GM10248 (cell line): ENCODE measurements at regions of chr1 and their contacts with region 1.

Region 1: GRCh38 chr1:201970334-201971159 is 11.9 kb upstream of the RNPEP start:
- DNase-seq: no peak
- CTCF ChIP-seq: no peak

Region 2: GRCh38 chr1:201877877-201878401 is 92.6 kb before region 1 on chr1:
- CTCF ChIA-PET with region 1: interaction called, 27 read pairs
- POLR2A ChIA-PET with region 1: no interaction called
- DNase-seq: peak; percentile 53
- CTCF ChIP-seq: peak; percentile 42

Region 3: DNA sequence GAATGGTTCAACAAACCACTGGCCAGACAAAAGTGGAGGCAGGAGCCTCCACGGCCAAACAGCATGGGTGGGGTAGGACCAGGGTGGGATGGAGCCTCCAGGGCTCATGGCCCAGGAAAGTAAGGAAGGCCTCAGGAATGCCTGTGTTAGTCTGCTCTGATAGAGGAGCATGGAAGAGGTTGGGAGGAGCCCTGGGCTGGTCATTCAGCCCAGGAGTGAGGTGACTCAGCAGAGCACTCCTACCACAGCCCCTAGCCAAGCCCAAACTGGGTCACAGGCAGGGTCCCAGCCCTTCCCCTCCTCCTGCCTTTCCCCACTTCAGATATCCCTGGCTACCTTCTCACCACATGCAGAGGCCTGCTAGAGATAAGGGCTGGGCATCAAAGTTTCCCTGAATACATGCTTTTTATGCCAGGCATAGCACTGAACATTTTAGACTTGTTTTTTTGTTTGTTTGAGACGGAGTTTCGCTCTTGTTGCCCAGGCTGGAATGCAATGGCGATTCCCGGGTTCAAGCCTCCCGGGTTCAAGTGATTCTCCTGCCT is 84.9 kb before region 1 on chr1:
- CTCF ChIA-PET with region 1: interaction called, 27 read pairs
- POLR2A ChIA-PET with region 1: no interaction called
- DNase-seq: peak; percentile 14
- CTCF ChIP-seq: no peak

Region 4: DNA sequence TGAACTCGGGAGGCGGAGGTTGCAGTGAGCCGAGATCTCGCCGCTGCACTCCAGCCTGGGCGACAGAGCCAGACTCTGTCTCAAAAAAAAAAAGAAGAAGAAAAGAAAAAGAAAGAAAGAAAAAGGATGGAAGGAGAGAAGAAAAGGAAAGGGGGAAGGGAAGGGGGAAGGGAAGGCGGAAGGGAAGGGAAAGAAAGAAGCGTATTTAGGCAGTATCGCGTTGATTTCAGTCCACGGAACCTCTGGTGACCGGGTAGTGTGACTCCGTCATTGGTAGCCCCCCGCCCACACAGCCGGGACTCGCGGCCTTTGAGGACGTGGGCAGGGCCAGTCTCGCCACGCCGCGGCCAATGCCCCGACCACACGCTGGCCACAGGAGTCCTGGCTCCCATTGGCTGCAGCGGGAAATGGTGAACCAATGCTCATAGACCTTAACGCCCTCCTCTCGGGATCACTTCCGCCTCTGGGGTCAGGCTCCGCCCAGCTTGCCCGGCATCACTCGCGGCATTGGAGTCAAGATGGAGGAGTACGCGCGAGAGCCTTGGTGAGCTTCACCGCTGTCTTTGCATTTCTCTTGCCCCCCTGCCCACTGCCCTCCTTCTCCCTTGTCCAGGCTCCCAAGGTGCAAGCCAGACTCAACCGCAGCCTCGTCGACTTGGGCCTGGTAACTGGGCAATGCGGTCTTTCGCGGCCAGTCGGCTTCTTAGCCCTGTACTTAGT is 15.4 kb before region 1 on chr1 and contains the start of gene TIMM17A:
- CTCF ChIA-PET with region 1: interaction called, 15 read pairs
- POLR2A ChIA-PET with region 1: no interaction called
- DNase-seq: peak; percentile 97
- CTCF ChIP-seq: no peak

Region 5: GRCh38 chr1:201982623-201983379 is 12.3 kb after region 1 on chr1 and contains the start of gene RNPEP:
- CTCF ChIA-PET with region 1: interaction called, 29 read pairs
- POLR2A ChIA-PET with region 1: interaction called, 4 read pairs
- DNase-seq: peak; percentile 65
- CTCF ChIP-seq: no peak